Activated T-helper 2 cell treated with anti-CD3 and anti-CD28 coated beads, Interferon-gamma antibody, Interleukin-2, Interleukin-4, amounts not matched to agents 10 μg/mL and 5 μg/mL and 100 μg/mL, durations not matched to agents 14 hours and 24 hours and 36 hours (primary cell): ENCODE measurements at regions of chr17 and their contacts with region 1.

Region 1: DNA sequence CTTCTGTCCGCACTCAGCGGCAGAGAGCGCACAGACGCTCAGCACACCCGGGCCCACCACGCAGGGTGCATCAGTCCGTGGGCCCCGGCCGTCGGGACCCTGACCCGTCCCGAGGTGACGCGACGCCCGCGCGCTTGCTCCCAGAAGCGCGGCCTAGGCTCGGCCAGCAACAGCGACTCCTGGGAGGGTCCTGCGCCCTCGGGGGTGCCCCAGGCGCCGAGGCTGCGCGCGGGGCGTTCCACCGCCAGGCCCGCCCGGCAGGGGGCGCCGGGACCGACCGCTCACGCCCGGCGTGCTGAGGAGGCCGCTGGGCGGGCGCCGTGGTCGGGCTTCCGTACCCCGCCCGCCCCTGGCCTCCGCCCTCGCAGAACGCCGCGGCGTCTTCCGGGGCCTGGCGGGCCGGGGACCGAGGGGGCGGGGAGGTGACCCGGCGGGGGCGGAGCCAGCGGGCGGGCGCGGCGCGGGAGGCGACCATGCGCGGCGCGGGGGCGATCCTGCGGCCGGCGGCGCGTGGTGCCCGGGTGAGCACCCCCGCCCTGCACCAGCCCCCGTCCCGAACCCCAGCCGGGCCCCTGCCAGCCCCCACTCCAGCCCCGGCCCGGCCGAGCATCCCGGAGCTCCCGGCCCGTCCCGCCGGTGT is at the start of gene CISD3:
- DNase-seq: peak; percentile 84
- H3K4me3 Mint-ChIP-seq: peak within 1 kb of the TSS; percentile 89
- H3K27ac Mint-ChIP-seq: peak within 1 kb of the TSS; percentile 86
- H3K4me1 Mint-ChIP-seq: peaks cover 71% of the 10 kb centered on the region
- H3K27me3 Mint-ChIP-seq: no peaks in the 10 kb centered on the region
- total RNA-seq, gene CISD3: 32.2 and 37.0 TPM in 2 replicates

Region 2: DNA sequence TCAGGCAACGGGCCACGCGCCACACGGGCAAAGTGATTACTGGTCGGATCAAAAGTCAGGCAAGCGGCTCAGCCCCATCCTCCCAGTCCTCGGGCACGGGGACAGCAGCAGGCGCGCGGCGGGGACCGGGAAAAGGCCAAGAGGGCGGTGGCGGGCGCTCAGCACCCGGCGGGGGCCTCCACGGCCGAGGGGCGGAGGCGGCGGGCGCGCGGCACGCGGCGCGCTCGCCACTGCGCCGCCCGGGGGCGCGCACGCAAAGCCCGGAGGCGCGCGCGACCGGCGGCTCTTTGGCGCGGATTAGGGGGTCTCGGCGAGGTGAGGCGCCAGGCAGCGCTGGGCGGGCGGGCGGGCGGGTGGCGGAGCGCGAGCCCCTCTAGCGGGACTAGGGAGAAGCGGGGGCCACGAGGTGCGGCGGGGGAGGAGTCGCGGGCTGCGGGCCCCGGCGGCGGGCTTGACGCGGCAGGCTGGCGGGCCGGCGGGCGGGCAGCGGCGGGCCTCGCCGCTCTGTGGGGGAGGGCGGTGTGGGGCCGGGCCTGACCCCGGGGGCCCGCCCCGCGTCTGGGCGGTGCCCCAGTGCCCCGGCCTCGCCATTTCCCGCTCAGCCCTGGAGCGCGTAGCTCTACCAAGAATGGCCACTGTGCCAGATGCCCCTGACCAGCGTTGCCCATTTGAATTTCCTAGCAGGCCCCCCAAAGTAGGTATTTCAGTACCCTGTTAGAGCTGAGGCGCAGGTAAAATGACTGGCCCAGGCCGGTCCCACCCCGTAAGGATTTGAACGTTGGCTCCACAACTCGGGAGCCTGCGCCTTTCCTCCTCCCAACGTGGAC is 1323.2 kb before region 1 on chr17 and contains the starts of genes ACACA and TADA2A:
- intact Hi-C with region 1: loop called (anchors 10 kb)
- DNase-seq: peak; percentile 74
- H3K4me3 Mint-ChIP-seq: peak within 1 kb of the TSS; percentile 97
- H3K27ac Mint-ChIP-seq: peak within 1 kb of the TSS; percentile 94
- H3K4me1 Mint-ChIP-seq: peaks cover 42% of the 10 kb centered on the region
- H3K27me3 Mint-ChIP-seq: no peaks in the 10 kb centered on the region
- total RNA-seq, gene ACACA: 109 and 110 TPM in 2 replicates
- total RNA-seq, gene TADA2A: 34.3 and 34.6 TPM in 2 replicates

Region 3: DNA sequence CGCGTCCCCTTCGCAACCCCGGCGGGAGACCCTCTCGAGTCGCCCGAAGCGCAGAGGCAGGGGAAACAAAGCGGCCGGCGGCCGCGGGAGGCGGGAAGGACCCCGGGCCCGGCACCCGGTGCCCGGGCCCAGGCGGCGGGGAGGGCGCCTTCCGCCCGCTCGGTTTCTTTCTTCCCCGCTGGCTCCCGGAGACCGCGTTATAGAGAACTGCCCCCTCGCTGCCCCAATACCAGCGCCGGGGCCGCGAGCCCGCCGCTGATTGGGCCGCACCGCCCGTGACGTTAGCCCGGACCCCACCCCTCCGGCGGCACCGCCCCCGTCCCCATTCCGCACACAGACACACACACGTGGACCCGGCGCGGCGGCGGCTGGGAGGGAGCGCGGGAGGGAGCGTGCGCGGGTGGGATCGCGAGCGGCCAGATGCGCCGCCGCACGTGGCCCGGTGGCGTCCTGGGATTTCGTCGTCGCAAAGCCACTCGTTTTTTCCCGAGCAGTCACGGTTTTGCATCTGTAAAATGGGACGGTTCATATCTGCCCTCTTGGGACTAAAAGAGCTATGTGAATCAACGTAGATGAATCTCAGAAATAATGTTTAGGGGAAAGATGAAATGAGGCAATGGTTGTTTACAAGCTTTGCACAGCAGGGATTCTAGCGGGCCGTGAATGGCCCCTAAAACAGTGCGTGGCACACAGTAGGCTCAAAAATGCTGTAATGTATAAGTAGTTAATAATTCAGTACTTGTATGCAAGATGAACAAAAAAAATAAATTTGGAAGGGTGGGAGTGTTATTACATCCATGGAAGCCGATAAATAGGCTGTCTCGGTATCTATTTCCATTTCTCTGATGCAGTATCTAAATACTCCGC is 55.0 kb before region 1 on chr17 and contains the start of gene EPOP:
- intact Hi-C with region 1: loop called (anchors 1 kb)
- DNase-seq: peak; percentile 88
- H3K4me3 Mint-ChIP-seq: peak within 1 kb of the TSS; percentile 57
- H3K27ac Mint-ChIP-seq: peak within 1 kb of the TSS; percentile 70
- H3K4me1 Mint-ChIP-seq: peaks cover 37% of the 10 kb centered on the region
- H3K27me3 Mint-ChIP-seq: peaks cover 19% of the 10 kb centered on the region
- total RNA-seq, gene EPOP: 34.9 TPM in 2 replicates

Region 4: GRCh38 chr17:38799378-38800236 is 69.6 kb after region 1 on chr17 and contains the start of gene PIP4K2B:
- intact Hi-C with region 1: no loop called
- DNase-seq: peak; percentile 86
- H3K4me3 Mint-ChIP-seq: peak within 1 kb of the TSS; percentile 98
- H3K27ac Mint-ChIP-seq: peak within 1 kb of the TSS; percentile 91
- H3K4me1 Mint-ChIP-seq: peaks cover 30% of the 10 kb centered on the region
- H3K27me3 Mint-ChIP-seq: no peaks in the 10 kb centered on the region
- total RNA-seq, gene PIP4K2B: 35.3 and 45.3 TPM in 2 replicates